Colonic mucosa (tissue), 4 donors: ENCODE measurements at regions of chr14 and their contacts with region 1.

Region 1: GRCh38 chr14:101635749-101636560 is 74.7 kb downstream of the DIO3 start:
- DNase-seq: no peak
- H3K4me3 ChIP-seq: no peak overlapping the region
- H3K27ac ChIP-seq: no peak overlapping the region
- H3K4me1 ChIP-seq: no peaks in the 10 kb centered on the region
- H3K27me3 ChIP-seq: no peaks in the 10 kb centered on the region
- CTCF ChIP-seq: no peak

Region 2: DNA sequence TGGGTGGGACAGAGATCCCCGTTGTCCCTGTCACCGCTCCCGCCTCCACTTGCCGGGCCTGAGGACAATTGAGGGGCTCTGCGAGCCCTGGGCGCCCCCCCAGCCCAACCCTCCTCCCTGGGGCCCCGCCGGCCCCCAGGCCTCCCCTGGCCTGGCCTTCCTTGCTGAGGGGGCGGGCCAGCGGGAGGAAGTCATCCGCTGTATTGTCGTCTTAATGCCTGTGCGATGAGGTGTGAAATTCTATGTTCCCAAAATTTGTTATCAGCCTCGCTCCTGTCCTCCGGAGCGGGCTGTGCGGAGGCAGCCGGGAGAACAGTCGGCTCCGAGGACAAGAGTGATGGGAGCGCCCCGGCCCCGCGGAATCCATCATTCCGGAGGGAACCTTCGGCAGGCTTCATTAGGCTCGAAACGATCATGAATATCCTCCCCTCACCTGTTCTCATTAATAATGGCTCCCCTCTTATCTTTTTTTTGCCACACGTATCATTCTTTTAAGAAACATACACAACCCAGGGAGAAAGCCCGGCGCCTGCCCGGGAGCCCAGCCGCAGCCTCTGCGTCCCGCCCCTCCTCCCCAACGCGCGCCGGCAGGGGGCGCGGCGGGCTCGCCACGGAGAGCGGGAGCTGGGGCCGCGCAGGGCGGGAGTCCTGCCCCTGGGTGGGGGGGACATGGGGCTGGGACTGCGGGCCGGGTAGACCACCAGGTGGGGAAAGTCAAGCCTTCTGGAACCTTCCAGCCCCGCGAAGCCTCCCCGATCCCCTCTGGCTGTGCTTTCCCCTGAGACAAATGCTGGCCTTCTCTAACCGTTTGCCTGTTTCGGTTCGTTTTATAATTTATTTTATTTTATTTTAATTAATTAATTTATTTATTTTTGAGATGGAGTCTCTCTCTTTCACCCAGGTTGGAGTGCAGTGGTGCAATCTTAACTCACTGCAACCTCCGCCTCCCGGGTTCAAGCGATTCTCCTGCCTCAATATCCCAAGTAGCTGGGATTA is 926.4 kb before region 1 on chr14:
- intact Hi-C with region 1: loop called (anchors 10 kb)
- DNase-seq: no peak
- H3K4me3 ChIP-seq: no peak overlapping the region
- H3K27ac ChIP-seq: no peak overlapping the region
- H3K4me1 ChIP-seq: peaks cover 6% of the 10 kb centered on the region
- H3K27me3 ChIP-seq: no peaks in the 10 kb centered on the region
- CTCF ChIP-seq: peak; percentile 51

Region 3: DNA sequence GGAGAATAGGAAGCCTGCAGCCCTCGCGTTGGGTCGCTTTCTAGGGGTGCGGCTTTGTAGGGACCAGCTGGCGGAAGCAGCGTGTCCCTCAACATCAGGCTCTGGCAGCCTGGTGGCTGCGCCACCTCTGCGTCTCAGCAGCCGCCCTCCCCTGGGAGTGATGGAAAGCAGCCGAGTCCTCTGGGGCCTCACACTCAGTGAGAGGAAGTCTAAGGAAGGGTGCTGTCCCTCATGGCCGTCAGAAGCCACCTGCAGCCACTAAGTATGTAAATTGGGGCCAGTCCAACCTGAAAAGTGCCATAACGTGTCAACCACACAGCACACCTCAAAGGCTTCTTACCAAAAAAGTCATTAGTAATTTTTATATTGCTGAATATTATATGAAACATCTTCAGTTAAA is 584.1 kb after region 1 on chr14:
- intact Hi-C with region 1: no loop called
- DNase-seq: no peak
- H3K4me3 ChIP-seq: no peak overlapping the region
- H3K27ac ChIP-seq: no peak overlapping the region
- H3K4me1 ChIP-seq: no peaks in the 10 kb centered on the region
- H3K27me3 ChIP-seq: no peaks in the 10 kb centered on the region
- CTCF ChIP-seq: no peak